ENCODE measurements at regions of chr1 and their contacts with region 1.

Region 1: GRCh38 chr1:206489980-206490770 is 17.2 kb upstream of the RASSF5 start:
- DNase-seq: peak; percentile 73 to 93 (median 88)
- ATAC-seq: peak; percentile 88 to 98 (median 96)
- H3K4me3 ChIP-seq: no peak overlapping the region
- H3K27ac ChIP-seq: no peak overlapping the region
- H3K4me1 ChIP-seq: peaks cover 4 to 7% (median 6%) of the 10 kb centered on the region in 3 donors
- H3K27me3 ChIP-seq: no peaks in the 10 kb centered on the region
- CTCF ChIP-seq: peak; percentile 91 to 98 (median 96)

Region 2: GRCh38 chr1:206507284-206508129 is 17.3 kb after region 1 on chr1 and contains the start of gene RASSF5:
- intact Hi-C with region 1: no loop called
- DNase-seq: peak; percentile 86 to 96 (median 92)
- ATAC-seq: peak; percentile 88 to 93 (median 92)
- H3K4me3 ChIP-seq: peak within 1 kb of the TSS; percentile 58 to 90 (median 66)
- H3K27ac ChIP-seq: peak within 1 kb of the TSS; percentile 11 to 66 (median 30)
- H3K4me1 ChIP-seq: peaks cover 0 to 15% (median 0%) of the 10 kb centered on the region in 3 donors
- H3K27me3 ChIP-seq: no peaks in the 10 kb centered on the region
- CTCF ChIP-seq: no peak
- total RNA-seq, gene RASSF5: 8.2 to 17.8 (median 12.5) TPM

Region 3: GRCh38 chr1:206583707-206584648 is 93.8 kb after region 1 on chr1:
- intact Hi-C with region 1: loop called (anchors 5 kb)
- DNase-seq: peak in 5 of 6 donors; percentile 56 to 90 (median 76)
- ATAC-seq: peak; percentile 72 to 78 (median 74)
- H3K4me3 ChIP-seq: no peak overlapping the region
- H3K27ac ChIP-seq: peak overlapping the region in 1 of 4 donors; percentile 12
- H3K4me1 ChIP-seq: no peaks in the 10 kb centered on the region
- H3K27me3 ChIP-seq: no peaks in the 10 kb centered on the region
- CTCF ChIP-seq: peak; percentile 80 to 95 (median 89)

Region 4: GRCh38 chr1:206589206-206589605 is 99.0 kb after region 1 on chr1:
- intact Hi-C with region 1: loop called (anchors 5 kb)
- DNase-seq: no peak
- ATAC-seq: peak in 3 of 4 donors; percentile 29 to 57 (median 52)
- H3K4me3 ChIP-seq: no peak overlapping the region
- H3K27ac ChIP-seq: no peak overlapping the region
- H3K4me1 ChIP-seq: no peaks in the 10 kb centered on the region
- H3K27me3 ChIP-seq: no peaks in the 10 kb centered on the region
- CTCF ChIP-seq: no peak

Region 5: GRCh38 chr1:206663832-206664652 is 173.9 kb after region 1 on chr1:
- intact Hi-C with region 1: loop called in 1 of 3 experiments (anchors 10 kb)
- DNase-seq: peak; percentile 42 to 74 (median 66)
- ATAC-seq: peak; percentile 57 to 81 (median 70)
- H3K4me3 ChIP-seq: peak overlapping the region in 1 of 4 donors; percentile 27
- H3K27ac ChIP-seq: no peak overlapping the region
- H3K4me1 ChIP-seq: peaks cover 11 to 18% (median 15%) of the 10 kb centered on the region in 3 donors
- H3K27me3 ChIP-seq: no peaks in the 10 kb centered on the region
- CTCF ChIP-seq: peak; percentile 74 to 86 (median 80)

Region 6: GRCh38 chr1:206912445-206913095 is 422.4 kb after region 1 on chr1:
- intact Hi-C with region 1: loop called in 1 of 3 experiments (anchors 10 kb)
- DNase-seq: peak in 5 of 6 donors; percentile 54 to 82 (median 66)
- ATAC-seq: peak; percentile 42 to 62 (median 51)
- H3K4me3 ChIP-seq: no peak overlapping the region
- H3K27ac ChIP-seq: no peak overlapping the region
- H3K4me1 ChIP-seq: peaks cover 0 to 27% (median 7%) of the 10 kb centered on the region in 3 donors
- H3K27me3 ChIP-seq: no peaks in the 10 kb centered on the region
- CTCF ChIP-seq: peak; percentile 70 to 82 (median 81)

Measured in pancreas (tissue), 10 donors.